ENCODE measurements at regions of chr14 and their contacts with region 1.

Region 1: GRCh38 chr14:44912041-44912869 is 49.5 kb downstream of the KLHL28 start:
- DNase-seq: no peak
- H3K4me3 ChIP-seq: peak overlapping the region; percentile 11
- CTCF ChIP-seq: no peak
- POLR2A ChIP-seq: no peak

Region 2: DNA sequence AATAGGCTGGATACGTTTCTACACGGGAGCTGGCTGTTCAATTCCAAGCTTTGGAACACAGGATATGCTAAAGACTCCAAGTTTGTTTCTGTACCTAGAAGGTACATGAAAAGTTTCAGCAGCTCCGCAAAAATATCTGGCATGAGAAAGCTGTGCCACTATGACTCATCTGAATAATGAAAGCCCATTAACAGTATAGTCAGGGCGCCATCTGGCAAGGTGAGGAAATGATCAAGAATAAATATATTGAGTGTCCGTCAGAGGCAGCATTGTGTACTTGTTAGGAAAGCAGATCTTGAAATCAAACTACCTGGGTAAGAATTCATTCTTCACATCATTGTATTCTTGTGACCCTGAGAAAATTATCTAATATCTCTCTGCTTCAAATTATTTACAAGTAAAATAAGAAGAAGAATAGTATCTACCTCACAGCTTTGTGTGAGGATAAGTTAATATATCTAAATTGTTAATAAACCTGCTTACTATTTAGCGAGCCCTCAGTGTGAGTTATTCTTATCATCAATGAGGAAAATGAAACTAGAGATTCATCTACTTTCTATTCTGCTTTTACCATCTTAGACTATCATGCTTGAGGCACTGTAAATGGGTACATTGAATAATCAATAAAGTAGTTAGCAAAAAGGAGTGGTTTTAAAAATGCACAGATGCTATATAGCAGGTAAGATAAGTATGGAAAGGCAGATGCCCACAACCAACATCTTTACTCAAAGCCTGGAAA is 458.7 kb before region 1 on chr14:
- intact Hi-C with region 1: no loop called
- DNase-seq: no peak
- H3K4me3 ChIP-seq: no peak overlapping the region
- CTCF ChIP-seq: no peak
- POLR2A ChIP-seq: no peak

Region 3: GRCh38 chr14:45267071-45267470 is 354.8 kb after region 1 on chr14:
- intact Hi-C with region 1: loop called (anchors 10 kb)
- DNase-seq: no peak
- H3K4me3 ChIP-seq: no peak overlapping the region
- CTCF ChIP-seq: no peak
- POLR2A ChIP-seq: no peak